Activated B cell treated with CpG ODN at 0.5 μM for 24 hours (primary cell): ENCODE measurements at regions of chr6 and their contacts with region 1.

Region 1: GRCh38 chr6:75601304-75602245 is at the start of gene SENP6:
- DNase-seq: peak; percentile 78
- ATAC-seq: peak; percentile 79
- H3K4me3 Mint-ChIP-seq: peak within 1 kb of the TSS; percentile 98
- H3K27ac Mint-ChIP-seq: peak within 1 kb of the TSS; percentile 98
- H3K4me1 Mint-ChIP-seq: peaks cover 70% of the 10 kb centered on the region
- H3K27me3 Mint-ChIP-seq: no peaks in the 10 kb centered on the region
- CTCF ChIP-seq: no peak
- total RNA-seq, gene SENP6: 116 and 134 TPM in 2 replicates

Region 2: GRCh38 chr6:75243333-75244062 is 358.1 kb before region 1 on chr6 and contains the start of gene COX7A2:
- CTCF ChIA-PET with region 1: no interaction called
- POLR2A ChIA-PET with region 1: interaction called, 20 read pairs
- intact Hi-C with region 1: loop called (anchors 2 kb)
- DNase-seq: peak; percentile 77
- ATAC-seq: peak; percentile 97
- H3K4me3 Mint-ChIP-seq: peak within 1 kb of the TSS; percentile 94
- H3K27ac Mint-ChIP-seq: peak within 1 kb of the TSS; percentile 95
- H3K4me1 Mint-ChIP-seq: peaks cover 21% of the 10 kb centered on the region
- H3K27me3 Mint-ChIP-seq: peaks cover 13% of the 10 kb centered on the region
- CTCF ChIP-seq: no peak
- total RNA-seq, gene COX7A2: 259 and 301 TPM in 2 replicates

Region 3: GRCh38 chr6:75611702-75612375 is 10.3 kb after region 1 on chr6:
- CTCF ChIA-PET with region 1: no interaction called
- POLR2A ChIA-PET with region 1: interaction called, 38 read pairs
- intact Hi-C with region 1: loop called (anchors 1 kb)
- DNase-seq: no peak
- ATAC-seq: no peak
- H3K4me3 Mint-ChIP-seq: peak overlapping the region; percentile 59
- H3K27ac Mint-ChIP-seq: peak overlapping the region; percentile 35
- H3K4me1 Mint-ChIP-seq: peaks cover 93% of the 10 kb centered on the region
- H3K27me3 Mint-ChIP-seq: no peaks in the 10 kb centered on the region
- CTCF ChIP-seq: no peak

Region 4: DNA sequence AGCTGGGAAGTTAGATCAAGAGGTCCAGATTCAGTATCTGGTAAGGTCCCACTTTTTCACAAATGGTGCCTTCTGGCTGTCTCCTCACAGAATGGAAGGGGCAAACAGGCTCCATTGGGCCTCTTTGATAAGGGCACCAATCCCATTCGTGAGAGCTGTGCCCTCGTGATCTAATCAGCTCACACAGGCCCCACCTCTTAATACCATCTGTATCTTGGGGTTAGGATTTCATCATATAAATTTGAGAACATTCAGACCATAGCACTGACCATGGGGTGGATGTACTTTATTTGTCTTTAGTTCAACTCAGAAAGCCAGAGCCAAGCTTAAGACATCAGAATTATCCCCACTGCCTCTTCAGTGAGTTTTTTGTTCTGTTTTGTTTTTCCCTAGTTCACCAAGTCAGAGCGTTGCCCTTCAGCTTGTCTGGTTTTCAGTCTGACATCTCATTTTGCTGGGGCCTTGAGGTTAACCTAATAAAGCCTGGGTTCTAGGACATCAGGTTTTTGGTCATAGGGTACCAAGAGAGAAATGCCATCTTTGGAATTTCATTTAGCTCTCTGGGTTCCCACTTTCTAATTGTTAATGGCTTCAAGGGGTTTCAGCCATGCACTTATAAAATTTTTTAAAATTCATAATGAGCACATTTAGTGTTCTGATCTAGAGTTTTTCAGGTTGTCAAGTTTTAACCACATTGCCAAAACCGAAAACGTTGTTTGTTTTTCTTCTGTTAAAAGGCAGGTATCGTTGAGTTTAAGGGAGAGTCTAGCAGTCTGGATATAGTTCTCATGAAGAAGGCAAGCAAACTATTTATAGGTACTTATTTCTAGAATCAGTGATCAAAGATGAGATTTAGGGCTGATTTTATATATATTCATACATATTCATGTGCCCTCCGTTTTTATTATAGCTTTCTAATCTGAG is 19.1 kb after region 1 on chr6:
- CTCF ChIA-PET with region 1: no interaction called
- POLR2A ChIA-PET with region 1: interaction called, 7 read pairs
- intact Hi-C with region 1: loop called (anchors 2 kb)
- DNase-seq: no peak
- ATAC-seq: no peak
- H3K4me3 Mint-ChIP-seq: no peak overlapping the region
- H3K27ac Mint-ChIP-seq: peak overlapping the region; percentile 37
- H3K4me1 Mint-ChIP-seq: peaks cover 58% of the 10 kb centered on the region
- H3K27me3 Mint-ChIP-seq: no peaks in the 10 kb centered on the region
- CTCF ChIP-seq: no peak

Region 5: DNA sequence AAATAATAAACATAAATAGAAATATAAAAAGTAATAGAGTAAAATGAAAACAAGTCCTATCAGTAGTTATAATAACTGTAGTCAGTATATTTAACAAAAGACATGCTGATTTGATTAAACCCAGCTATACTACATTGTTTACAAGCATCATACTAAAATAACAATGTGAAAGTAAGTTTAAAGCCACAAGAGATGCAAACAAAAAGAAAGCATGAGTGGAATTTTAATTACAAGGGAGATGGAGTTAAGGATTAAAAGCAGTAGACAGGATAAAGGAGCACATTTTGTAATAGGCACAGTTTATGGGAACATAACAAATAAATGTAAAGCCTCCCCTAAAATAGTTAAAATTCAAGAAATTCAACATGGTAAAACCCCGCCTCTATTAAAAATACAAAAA is 41.6 kb after region 1 on chr6:
- CTCF ChIA-PET with region 1: no interaction called
- POLR2A ChIA-PET with region 1: no interaction called
- intact Hi-C with region 1: loop called (anchors 5 kb)
- DNase-seq: no peak
- ATAC-seq: no peak
- H3K4me3 Mint-ChIP-seq: no peak overlapping the region
- H3K27ac Mint-ChIP-seq: no peak overlapping the region
- H3K4me1 Mint-ChIP-seq: no peaks in the 10 kb centered on the region
- H3K27me3 Mint-ChIP-seq: no peaks in the 10 kb centered on the region
- CTCF ChIP-seq: no peak

Region 6: DNA sequence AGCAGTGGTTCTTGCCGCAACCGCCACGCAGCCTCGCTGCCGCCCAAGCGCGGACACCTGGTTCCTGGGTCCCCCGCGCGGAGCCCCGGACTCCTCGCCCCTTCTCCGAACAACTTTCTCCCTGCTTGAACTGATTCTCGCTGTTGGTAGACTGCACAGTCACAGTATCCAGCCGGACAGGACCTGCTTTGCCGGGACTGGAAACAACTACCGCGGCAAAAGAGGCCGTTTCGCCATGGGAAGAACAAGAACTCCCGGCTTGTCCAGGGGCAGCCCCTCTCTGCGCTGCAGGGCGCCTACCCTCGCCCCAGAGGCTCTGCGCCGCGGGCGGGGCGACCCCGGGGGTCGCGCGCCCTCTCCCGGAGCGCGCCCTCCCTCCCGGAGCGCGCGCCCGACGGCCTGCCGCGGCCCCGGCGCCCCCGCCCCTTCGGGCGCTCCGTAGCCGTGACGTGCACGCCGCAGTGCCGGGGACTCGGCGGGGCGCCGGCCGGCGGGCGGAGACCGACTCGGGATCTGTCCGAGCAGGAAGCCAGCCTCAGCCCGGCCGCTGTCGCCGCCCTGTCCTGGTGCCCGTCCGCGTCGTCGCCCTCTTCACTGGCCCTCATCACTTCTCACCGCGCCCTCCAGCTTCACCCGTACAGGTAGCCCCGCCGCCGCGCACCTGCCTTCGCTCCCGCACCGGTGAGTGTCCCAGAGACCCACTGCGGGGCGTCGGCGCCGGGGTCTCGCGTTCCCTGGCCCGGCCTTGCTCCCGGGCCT is 147.3 kb after region 1 on chr6 and contains the start of gene MYO6:
- CTCF ChIA-PET with region 1: no interaction called
- POLR2A ChIA-PET with region 1: no interaction called
- intact Hi-C with region 1: loop called (anchors 2 kb)
- DNase-seq: peak; percentile 45
- ATAC-seq: peak; percentile 75
- H3K4me3 Mint-ChIP-seq: peak within 1 kb of the TSS; percentile 85
- H3K27ac Mint-ChIP-seq: no peak within 1 kb of the TSS
- H3K4me1 Mint-ChIP-seq: peaks cover 20% of the 10 kb centered on the region
- H3K27me3 Mint-ChIP-seq: peaks cover 40% of the 10 kb centered on the region
- CTCF ChIP-seq: no peak
- total RNA-seq, gene MYO6: 0.42 and 0.44 TPM in 2 replicates